Left ventricle myocardium inferior (tissue), 1 donor: ENCODE measurements at regions of chr17 and their contacts with region 1.

Region 1: DNA sequence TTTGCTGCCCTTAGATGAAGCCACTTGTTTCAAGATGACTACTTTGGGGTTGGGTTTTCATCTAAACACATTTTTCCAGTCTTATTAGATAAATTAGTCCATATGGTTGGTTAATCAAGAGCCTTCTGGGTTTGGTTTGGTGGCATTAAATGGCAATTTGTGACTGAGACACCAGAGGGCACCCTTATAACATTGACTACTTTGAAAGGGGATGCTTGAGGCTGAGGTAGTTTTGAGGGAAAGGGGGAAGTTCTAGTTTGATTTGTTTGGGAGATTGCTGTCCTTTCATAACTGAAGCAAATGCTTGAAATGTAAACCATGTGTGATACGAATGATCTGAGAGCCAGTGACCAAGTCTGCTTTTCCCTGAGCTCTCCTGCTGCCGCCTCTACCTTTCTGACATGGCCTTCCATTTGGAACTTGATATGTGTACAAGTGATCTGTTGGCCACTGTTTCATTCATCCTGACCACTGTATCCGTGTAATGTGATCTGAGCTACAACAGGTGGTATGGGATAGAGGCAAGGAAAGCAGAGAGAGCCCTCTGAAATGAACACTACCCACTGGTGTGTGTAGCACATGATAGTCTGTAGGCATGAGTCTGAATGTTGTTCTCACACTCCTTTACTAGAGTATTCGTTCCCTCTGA is 5.8 kb upstream of the RARA start:
- DNase-seq: no peak
- H3K4me3 ChIP-seq: no peak overlapping the region
- H3K27ac ChIP-seq: peak overlapping the region; percentile 25
- H3K4me1 ChIP-seq: peaks cover 66% of the 10 kb centered on the region
- H3K27me3 ChIP-seq: no peaks in the 10 kb centered on the region
- CTCF ChIP-seq: peak; percentile 82

Region 2: DNA sequence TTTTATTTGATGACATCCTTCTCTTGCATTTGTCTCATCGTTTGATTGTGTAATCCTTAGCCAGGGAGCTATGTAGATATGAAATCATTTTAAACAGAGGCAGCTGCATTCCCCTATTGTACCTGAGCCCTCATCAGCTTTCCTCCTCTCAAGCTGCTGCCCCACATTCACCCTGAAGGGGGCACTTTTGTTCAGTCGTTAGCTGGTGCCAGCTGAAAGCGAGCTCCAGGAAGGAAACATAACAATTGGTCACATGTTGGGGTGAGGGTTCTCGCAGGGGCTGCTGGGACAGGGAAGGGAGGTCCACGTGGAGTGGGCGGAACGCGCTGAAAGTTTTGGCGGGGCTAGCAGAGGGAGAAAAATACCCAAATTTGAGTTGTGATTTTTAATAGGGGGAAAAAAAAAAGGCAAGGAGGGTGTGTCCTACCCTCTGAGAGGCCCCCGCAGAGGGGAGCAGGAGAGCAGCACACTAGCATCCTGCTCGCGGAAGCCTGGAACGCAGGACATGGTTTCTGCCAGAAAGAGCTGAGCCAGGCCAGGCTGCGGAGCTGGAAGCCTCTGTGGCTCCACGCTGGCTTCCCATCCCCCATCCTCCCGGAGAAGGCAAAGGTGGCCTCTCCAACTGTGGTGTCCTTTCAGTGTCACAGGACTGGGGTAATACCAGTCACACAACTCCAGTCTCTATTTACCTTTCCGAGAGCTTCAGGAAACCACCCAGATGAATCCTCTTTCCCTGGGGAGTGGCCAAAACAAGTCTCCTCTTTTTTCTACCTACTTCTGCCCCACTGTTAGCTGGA is 189.8 kb before region 1 on chr17:
- intact Hi-C with region 1: no loop called
- DNase-seq: peak; percentile 91
- H3K4me3 ChIP-seq: peak overlapping the region; percentile 66
- H3K27ac ChIP-seq: peak overlapping the region; percentile 100
- H3K4me1 ChIP-seq: peaks cover 58% of the 10 kb centered on the region
- H3K27me3 ChIP-seq: no peaks in the 10 kb centered on the region
- CTCF ChIP-seq: peak; percentile 90

Region 3: GRCh38 chr17:40349920-40350909 is 47.1 kb after region 1 on chr17:
- intact Hi-C with region 1: loop called (anchors 5 kb)
- DNase-seq: no peak
- H3K4me3 ChIP-seq: peak overlapping the region; percentile 78
- H3K27ac ChIP-seq: peak overlapping the region; percentile 97
- H3K4me1 ChIP-seq: peaks cover 81% of the 10 kb centered on the region
- H3K27me3 ChIP-seq: no peaks in the 10 kb centered on the region
- CTCF ChIP-seq: no peak